SK-N-SH (cell line): ENCODE measurements at regions of chr11 and their contacts with region 1.

Region 1: GRCh38 chr11:65888163-65888814 is at the start of gene FIBP:
- DNase-seq: peak; percentile 97
- H3K4me3 ChIP-seq: peak within 1 kb of the TSS; percentile 56 to 82
- H3K27ac ChIP-seq: peak within 1 kb of the TSS; percentile 94 to 99
- H3K4me1 ChIP-seq: peaks cover 41 to 52% of the 10 kb centered on the region in 2 experiments
- H3K27me3 ChIP-seq: no peaks in the 10 kb centered on the region
- CTCF ChIP-seq: peak; percentile 68
- EP300 ChIP-seq: no peak
- RAD21 ChIP-seq: peak; percentile 24
- polyA plus RNA-seq, gene FIBP: 159 and 190 TPM in 2 replicates

Region 2: DNA sequence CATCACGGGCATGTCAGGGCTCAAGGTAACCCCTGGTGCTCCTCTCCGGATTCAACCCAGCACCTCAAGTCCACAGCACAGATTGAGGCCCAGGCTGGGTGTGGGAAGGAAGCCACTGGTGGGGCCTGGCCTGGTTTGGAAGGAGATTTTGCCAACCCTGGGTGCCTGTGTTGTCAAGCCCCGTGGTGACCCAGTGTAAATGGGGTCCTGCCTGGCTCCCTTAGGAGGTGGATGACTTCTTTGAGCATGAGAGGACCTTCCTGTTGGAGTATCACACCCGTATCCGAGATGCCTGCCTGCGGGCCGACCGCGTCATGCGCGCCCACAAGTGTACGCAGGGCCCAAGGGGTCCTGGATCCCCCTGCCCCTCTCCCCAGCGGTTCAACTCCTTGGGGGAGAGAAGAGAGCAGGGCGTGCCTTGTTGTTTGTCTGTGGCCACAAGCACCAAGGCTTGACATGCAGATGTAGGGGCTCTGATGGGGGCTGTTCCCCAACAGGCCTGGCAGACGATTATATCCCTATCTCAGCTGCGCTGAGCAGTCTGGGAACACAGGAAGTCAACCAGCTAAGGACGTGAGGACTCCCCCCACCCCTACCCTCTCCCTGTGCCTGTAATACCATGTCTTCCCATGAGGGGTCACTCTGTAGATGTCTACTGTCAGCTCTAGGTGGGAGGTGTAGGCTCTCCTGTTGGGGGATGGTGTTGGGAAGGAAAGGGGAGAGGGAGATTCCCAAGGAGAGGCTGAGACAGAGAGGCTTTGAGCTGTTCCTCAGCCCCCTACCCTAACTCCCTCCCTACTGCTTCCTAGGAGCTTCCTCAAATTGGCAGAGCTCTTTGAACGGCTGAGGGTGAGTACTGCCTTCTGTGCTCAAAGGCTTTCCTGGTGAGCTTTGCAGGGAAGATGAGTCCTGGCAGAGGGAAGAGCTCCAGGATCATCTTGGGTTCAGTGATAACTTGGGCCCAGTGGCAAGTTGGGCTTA is 37.2 kb before region 1 on chr11:
- CTCF ChIA-PET with region 1: interaction called, 13 read pairs
- POLR2A ChIA-PET with region 1: interaction called, 3 read pairs
- DNase-seq: peak; percentile 76
- H3K4me3 ChIP-seq: no peak overlapping the region
- H3K27ac ChIP-seq: no peak overlapping the region
- H3K4me1 ChIP-seq: peaks cover 0 to 16% of the 10 kb centered on the region in 2 experiments; a peak in 2 of 4 replicates
- H3K27me3 ChIP-seq: no peaks in the 10 kb centered on the region
- CTCF ChIP-seq: peak; percentile 61
- EP300 ChIP-seq: no peak
- RAD21 ChIP-seq: no peak

Region 3: DNA sequence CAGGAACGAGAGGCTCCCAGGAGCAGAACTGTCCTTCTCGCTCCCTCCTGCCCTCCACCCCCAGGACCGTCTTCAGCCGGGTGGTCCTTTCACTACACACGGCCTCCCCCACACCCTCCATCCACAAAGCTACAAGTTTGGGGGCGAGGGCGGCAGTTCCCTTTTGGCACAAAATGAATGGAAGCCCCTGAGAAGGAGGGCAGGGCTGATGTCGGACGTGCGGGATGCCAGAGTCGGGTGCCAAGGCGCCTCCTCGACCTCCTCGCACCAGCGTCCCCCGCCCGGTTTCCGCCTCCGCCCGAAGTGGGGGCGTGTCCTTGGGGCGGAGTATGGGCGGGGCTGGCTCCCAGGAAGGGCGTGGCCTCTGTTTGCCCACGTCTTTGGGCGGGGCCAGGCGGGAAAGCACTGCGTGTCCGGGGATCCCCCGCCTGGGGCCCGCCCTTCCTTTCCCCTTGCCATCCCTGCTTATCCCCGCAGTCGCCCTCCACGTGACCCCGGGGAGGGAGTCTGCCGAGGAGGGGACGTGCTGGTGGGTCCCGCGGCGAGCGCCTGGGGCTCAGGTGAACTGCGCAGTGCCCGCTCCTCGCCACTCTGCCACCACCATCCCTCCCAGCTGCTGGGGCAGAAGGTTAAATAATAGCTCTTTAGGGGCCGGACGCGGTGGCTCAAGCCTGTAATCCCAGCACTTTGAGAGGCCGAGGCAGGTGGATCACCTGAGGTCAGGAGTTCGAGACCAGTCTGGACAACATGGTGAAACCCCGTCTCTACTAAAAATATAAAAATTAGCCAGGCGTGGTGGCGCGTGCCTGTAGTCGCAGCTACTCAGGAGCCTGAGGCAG is 14.8 kb before region 1 on chr11:
- CTCF ChIA-PET with region 1: interaction called, 374 read pairs
- POLR2A ChIA-PET with region 1: interaction called, 11 read pairs
- DNase-seq: peak; percentile 98
- H3K4me3 ChIP-seq: peak overlapping the region; percentile 54 to 73
- H3K27ac ChIP-seq: peak overlapping the region; percentile 77 to 93
- H3K4me1 ChIP-seq: peaks cover 19 to 23% of the 10 kb centered on the region in 2 experiments; a peak in 3 of 4 replicates
- H3K27me3 ChIP-seq: no peaks in the 10 kb centered on the region
- CTCF ChIP-seq: no peak
- EP300 ChIP-seq: no peak
- RAD21 ChIP-seq: no peak

Region 4: DNA sequence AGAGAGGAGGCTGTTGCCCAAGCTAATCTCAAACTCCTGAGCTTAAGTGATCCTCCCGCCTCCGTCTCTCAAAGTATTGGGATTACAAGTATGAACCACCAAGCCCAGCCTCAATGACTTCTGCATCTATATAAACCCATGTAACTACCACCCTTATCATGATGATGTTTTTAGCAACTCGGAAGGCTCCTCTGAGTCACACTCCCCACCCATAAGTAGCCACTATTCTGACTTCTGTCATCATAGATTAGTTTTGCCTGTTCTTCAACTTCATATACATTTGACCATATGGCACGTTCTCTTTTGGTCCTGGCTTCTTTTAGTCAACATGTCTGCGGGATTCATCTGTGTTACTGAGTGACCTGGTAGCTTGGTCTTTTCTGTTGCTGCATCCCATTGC is 18.3 kb after region 1 on chr11:
- CTCF ChIA-PET with region 1: interaction called, 71 read pairs
- POLR2A ChIA-PET with region 1: interaction called, 4 read pairs
- DNase-seq: no peak
- H3K4me3 ChIP-seq: no peak overlapping the region
- H3K27ac ChIP-seq: no peak overlapping the region
- H3K4me1 ChIP-seq: peaks cover under 1 to 26% of the 10 kb centered on the region in 2 experiments; a peak in 3 of 4 replicates
- H3K27me3 ChIP-seq: no peaks in the 10 kb centered on the region
- CTCF ChIP-seq: no peak
- EP300 ChIP-seq: no peak
- RAD21 ChIP-seq: no peak

Region 5: GRCh38 chr11:65919146-65920033 is 31.1 kb after region 1 on chr11 and contains the start of gene DRAP1:
- CTCF ChIA-PET with region 1: interaction called, 24 read pairs
- POLR2A ChIA-PET with region 1: interaction called, 3 read pairs
- DNase-seq: peak; percentile 100
- H3K4me3 ChIP-seq: peak within 1 kb of the TSS; percentile 90 to 92
- H3K27ac ChIP-seq: peak within 1 kb of the TSS; percentile 87 to 97
- H3K4me1 ChIP-seq: peaks cover 32 to 43% of the 10 kb centered on the region in 2 experiments; a peak in 3 of 4 replicates
- H3K27me3 ChIP-seq: no peaks in the 10 kb centered on the region
- CTCF ChIP-seq: no peak
- EP300 ChIP-seq: peak in 1 of 2 experiments; percentile 29; a peak in 1 of 4 replicates
- RAD21 ChIP-seq: 0 out of 2 replicates have a peak, but pooled peaks have one; percentile 2
- polyA plus RNA-seq, gene DRAP1: 309 and 464 TPM in 2 replicates